A549 (cell line): ENCODE measurements at regions of chr5 and their contacts with region 1.

Region 1: DNA sequence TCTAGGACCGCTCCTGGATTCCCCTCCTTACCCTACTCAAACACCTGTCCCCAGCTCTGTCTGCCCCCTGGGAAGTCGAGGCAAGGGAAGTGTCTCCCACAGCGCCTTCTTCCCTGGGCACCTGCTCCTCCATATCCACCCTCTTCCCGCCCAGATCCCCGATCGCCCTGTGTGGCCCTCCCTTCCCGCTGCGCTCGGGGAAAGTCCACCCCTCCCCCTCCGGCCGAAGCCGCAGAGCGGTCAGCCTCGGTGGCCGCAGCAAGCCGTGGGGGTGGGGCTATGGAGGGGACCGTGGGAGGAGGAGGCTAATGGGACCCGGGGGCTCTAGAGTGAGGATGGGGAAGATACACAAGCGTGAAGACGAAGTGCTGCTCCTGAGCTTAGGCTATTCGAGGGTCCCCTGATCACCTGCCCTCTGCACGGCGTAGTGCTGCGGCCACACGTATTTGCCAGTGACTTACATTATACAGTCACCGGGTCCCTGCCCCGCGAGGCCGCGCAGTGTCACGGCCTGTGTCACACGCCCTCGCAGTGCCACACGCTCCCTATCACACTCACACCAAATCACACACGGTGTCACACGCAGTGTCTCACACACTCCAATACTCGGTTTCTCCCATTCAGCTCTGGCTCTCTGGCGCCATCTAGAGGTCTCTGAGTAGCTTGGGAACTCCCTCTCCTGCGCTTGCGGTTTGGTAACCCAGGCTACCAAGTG is 658 bp upstream of the PCDH1 start:
- DNase-seq: peak; percentile 74 to 91
- ATAC-seq: peak; percentile 65 to 89
- H3K4me3 ChIP-seq: peak overlapping the region; percentile 64
- H3K27ac ChIP-seq: peak overlapping the region; percentile 41 to 83; a peak in 4 of 6 replicates
- H3K4me1 ChIP-seq: peaks cover 22% of the 10 kb centered on the region
- CTCF ChIP-seq: peak; percentile 97
- EP300 ChIP-seq: no peak
- POLR2A ChIP-seq: no peak
- RAD21 ChIP-seq: peak; percentile 94

Region 2: GRCh38 chr5:141681695-141682641 is 196.9 kb before region 1 on chr5 and contains the start of gene ARAP3:
- CTCF ChIA-PET with region 1: interaction called, 14 read pairs
- POLR2A ChIA-PET with region 1: no interaction called
- DNase-seq: peak; percentile 69 to 75
- ATAC-seq: peak; percentile 87 to 93
- H3K4me3 ChIP-seq: peak within 1 kb of the TSS; percentile 49
- H3K27ac ChIP-seq: peak within 1 kb of the TSS; percentile 88 to 98
- H3K4me1 ChIP-seq: peaks cover 24% of the 10 kb centered on the region
- CTCF ChIP-seq: no peak
- EP300 ChIP-seq: no peak
- POLR2A ChIP-seq: peak; percentile 40
- RAD21 ChIP-seq: no peak
- polyA plus RNA-seq, gene ARAP3: 3.0 and 4.5 TPM in 2 replicates

Region 3: GRCh38 chr5:141747152-141748141 is 131.4 kb before region 1 on chr5:
- CTCF ChIA-PET with region 1: interaction called, 17 read pairs
- POLR2A ChIA-PET with region 1: no interaction called
- DNase-seq: no peak
- ATAC-seq: peak; percentile 27 to 74; a peak in 4 of 6 replicates
- H3K4me3 ChIP-seq: no peak overlapping the region
- H3K27ac ChIP-seq: no peak overlapping the region
- H3K4me1 ChIP-seq: no peaks in the 10 kb centered on the region
- CTCF ChIP-seq: no peak
- EP300 ChIP-seq: no peak
- POLR2A ChIP-seq: no peak
- RAD21 ChIP-seq: no peak

Region 4: DNA sequence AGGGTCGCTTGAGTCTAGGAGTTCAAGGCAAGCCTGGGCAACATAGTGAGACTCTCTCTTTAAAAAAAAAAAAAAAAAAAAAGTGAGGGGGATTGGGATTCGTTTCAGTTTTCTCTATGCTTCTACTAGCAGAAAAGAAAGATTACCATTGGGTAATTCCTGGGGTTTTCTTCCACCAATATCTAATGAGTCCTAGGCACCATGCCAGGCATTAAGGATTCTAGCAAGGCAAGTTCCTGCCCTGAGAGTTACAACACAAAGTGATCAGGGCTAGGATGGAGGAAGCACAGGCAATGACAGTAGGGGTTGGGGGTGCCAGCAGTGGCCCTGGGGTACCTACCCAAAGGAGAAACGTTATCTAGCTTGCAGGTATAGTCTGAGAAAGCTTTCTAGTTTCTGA is 91.5 kb before region 1 on chr5:
- CTCF ChIA-PET with region 1: interaction called, 22 read pairs
- POLR2A ChIA-PET with region 1: no interaction called
- DNase-seq: no peak
- ATAC-seq: no peak
- H3K4me3 ChIP-seq: no peak overlapping the region
- H3K27ac ChIP-seq: no peak overlapping the region
- H3K4me1 ChIP-seq: peaks cover 16% of the 10 kb centered on the region
- CTCF ChIP-seq: no peak
- EP300 ChIP-seq: no peak
- POLR2A ChIP-seq: no peak
- RAD21 ChIP-seq: no peak

Region 5: GRCh38 chr5:141835928-141836670 is 42.8 kb before region 1 on chr5:
- CTCF ChIA-PET with region 1: interaction called, 26 read pairs
- POLR2A ChIA-PET with region 1: no interaction called
- DNase-seq: no peak
- ATAC-seq: no peak
- H3K4me3 ChIP-seq: no peak overlapping the region
- H3K27ac ChIP-seq: no peak overlapping the region
- H3K4me1 ChIP-seq: peaks cover 4% of the 10 kb centered on the region; the same call in 1 of the 3 replicates
- CTCF ChIP-seq: no peak
- EP300 ChIP-seq: no peak
- POLR2A ChIP-seq: no peak
- RAD21 ChIP-seq: no peak

Region 6: DNA sequence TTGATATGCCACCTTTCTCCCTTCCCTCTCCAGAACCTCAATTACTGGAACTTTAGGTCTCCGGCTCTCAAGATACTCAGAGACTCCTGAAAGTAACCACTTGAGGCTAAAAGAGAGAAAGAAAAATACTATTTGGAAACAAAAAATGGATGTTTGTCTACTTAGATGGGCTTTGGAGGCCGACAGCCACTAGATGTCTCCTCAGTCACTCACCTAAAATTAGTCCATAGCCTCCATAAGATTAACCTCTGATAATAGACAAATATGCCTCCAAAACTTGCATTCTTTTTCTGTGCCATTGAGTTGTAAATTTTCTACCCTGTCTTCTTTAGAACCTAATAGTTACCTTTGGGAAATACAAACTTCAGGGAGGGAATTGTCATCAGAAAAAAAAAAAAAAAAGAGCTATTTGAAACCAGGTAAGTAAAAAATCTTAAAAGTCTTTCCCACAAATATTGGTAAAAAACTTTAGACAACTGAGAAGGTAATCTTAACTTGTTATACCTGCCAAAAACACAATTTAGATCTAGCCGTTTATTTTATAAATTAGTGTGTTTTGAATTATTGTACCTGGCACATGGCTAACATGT is 10.5 kb after region 1 on chr5:
- CTCF ChIA-PET with region 1: interaction called, 53 read pairs
- POLR2A ChIA-PET with region 1: no interaction called
- DNase-seq: peak in 1 of 2 experiments; percentile 31
- ATAC-seq: peak; percentile 71 to 75; a peak in 3 of 6 replicates
- H3K4me3 ChIP-seq: no peak overlapping the region
- H3K27ac ChIP-seq: no peak overlapping the region
- H3K4me1 ChIP-seq: no peaks in the 10 kb centered on the region
- CTCF ChIP-seq: peak; percentile 51
- EP300 ChIP-seq: no peak
- POLR2A ChIP-seq: no peak
- RAD21 ChIP-seq: peak; percentile 43 to 50; a peak in 3 of 5 replicates

Region 7: DNA sequence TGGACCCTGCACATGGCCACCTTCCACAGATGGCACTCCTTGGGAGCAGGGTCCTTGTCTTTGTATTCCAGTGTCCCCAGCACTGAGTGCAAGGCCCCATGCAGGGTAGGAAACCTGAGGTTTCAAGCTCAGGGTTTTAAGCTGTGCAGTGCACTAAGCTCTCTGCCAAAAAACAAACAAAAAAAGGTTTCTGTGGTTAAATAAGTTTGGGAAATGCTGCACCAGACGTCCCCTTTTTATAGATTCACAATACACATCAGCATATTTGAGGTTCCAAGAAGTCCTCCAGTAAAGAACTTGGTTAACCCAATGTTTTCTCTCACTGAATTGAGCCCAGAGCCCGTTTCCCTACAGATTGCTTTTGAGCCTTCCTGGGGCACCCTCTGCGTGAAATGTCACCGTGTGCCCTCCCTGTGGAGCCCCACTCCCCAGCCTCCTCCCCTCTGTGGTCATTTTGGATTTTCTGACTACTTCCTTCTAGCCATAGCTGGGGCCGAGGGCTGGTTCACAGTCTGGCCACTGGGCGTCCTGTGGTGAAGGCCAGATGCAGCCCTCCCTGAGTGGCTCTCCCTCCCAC is 61.9 kb after region 1 on chr5:
- CTCF ChIA-PET with region 1: interaction called, 15 read pairs
- POLR2A ChIA-PET with region 1: no interaction called
- DNase-seq: peak in 1 of 2 experiments; percentile 23
- ATAC-seq: peak; percentile 75 to 79
- H3K4me3 ChIP-seq: no peak overlapping the region
- H3K27ac ChIP-seq: peak overlapping the region in 1 of 2 experiments; percentile 29; a peak in 1 of 6 replicates
- H3K4me1 ChIP-seq: peaks cover 9% of the 10 kb centered on the region; the same call in 2 of the 3 replicates
- CTCF ChIP-seq: no peak
- EP300 ChIP-seq: no peak
- POLR2A ChIP-seq: no peak
- RAD21 ChIP-seq: no peak